Naive thymus-derived CD4-positive, alpha-beta T cell (primary cell): ENCODE measurements at regions of chr5 and their contacts with region 1.

Region 1: DNA sequence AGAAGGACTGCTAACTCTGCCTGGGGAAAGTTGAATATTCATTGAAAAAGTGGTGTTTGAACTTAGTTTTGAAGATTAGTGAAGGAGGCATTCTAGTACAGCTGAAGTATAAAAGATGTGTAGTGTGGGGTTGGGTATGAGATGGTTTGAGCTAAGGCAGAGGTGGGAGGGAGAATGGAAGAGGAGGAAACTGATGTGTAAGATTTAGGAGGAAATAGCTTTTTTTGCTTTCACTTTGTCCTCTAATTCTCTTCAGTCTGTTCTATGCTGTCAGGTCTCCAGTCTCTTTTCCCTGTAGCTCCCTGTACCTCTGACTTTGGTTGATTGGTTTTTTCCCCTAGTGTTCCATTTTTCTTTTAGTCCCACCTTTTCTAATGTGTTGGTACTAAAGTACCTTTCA is 9.0 kb downstream of the CREBRF start:
- DNase-seq: peak in 3 of 9 donors; percentile 8 to 23 (median 12)
- ATAC-seq: peak; percentile 62
- H3K4me3 ChIP-seq: no peak overlapping the region
- H3K4me3 Mint-ChIP-seq: peak overlapping the region; percentile 56 to 81 (median 70)
- H3K27ac ChIP-seq: peak overlapping the region; percentile 56
- H3K27ac Mint-ChIP-seq: peak overlapping the region; percentile 41 to 82 (median 76)
- H3K4me1 ChIP-seq: peaks cover 4 to 46% of the 10 kb centered on the region in 2 donors
- H3K4me1 Mint-ChIP-seq: peaks cover 35 to 94% (median 79%) of the 10 kb centered on the region in 7 donors
- H3K27me3 ChIP-seq: no peaks in the 10 kb centered on the region
- H3K27me3 Mint-ChIP-seq: no peaks in the 10 kb centered on the region

Region 2: DNA sequence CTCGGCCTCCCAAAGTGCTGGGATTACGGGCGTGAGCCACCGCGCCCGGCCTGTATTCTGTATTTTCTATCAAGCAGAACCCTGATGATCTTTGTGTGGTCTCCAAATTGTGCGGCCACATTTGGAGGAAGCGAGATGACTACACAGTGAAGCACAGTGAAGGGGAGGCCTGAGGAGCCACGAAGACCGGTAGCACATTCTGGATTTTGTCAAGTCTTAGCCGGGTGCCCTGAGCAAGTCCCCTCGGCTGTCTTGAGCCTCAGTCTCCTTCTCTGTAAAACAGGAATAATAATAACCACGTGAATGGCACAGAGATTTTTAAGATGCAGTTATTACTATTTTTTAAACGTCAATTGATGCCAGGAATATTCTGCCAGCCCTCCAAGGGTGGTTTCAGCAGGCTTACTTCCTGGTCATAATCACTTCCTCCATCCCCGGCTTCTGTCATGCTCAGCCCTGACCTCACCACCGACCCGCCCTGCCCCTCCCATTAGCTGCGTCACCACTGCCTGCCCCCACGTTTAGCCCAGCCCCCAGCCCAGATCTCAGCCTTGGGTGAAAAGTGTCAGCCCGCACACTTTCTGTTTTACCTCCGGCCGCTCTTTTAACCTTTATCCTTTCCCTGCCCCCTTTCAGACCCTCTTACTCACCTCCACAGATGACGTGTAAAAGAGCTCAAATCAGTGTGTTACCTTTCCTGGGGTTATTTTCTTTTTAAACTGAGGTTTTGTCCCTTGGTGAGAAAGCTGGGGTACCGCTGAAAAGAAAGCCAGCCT is 258.1 kb before region 1 on chr5:
- CTCF ChIA-PET with region 1: no interaction called
- POLR2A ChIA-PET with region 1: no interaction called
- intact Hi-C with region 1: no loop called
- DNase-seq: peak; percentile 24 to 78 (median 52)
- ATAC-seq: peak; percentile 98
- H3K4me3 ChIP-seq: peak overlapping the region; percentile 45
- H3K4me3 Mint-ChIP-seq: peak overlapping the region; percentile 73 to 87 (median 84)
- H3K27ac ChIP-seq: peak overlapping the region; percentile 74
- H3K27ac Mint-ChIP-seq: peak overlapping the region; percentile 86 to 98 (median 93)
- H3K4me1 ChIP-seq: peaks cover 0 to 12% of the 10 kb centered on the region in 2 donors
- H3K4me1 Mint-ChIP-seq: peaks cover 9 to 17% (median 13%) of the 10 kb centered on the region in 7 donors
- H3K27me3 ChIP-seq: no peaks in the 10 kb centered on the region
- H3K27me3 Mint-ChIP-seq: peaks cover 0 to 2% (median 0%) of the 10 kb centered on the region in 5 donors

Region 3: GRCh38 chr5:173078878-173079277 is 13.7 kb after region 1 on chr5:
- CTCF ChIA-PET with region 1: interaction called, 8 read pairs
- POLR2A ChIA-PET with region 1: no interaction called
- intact Hi-C with region 1: loop called in 1 of 2 experiments (anchors 2 kb)
- DNase-seq: no peak
- ATAC-seq: no peak
- H3K4me3 ChIP-seq: no peak overlapping the region
- H3K4me3 Mint-ChIP-seq: no peak overlapping the region
- H3K27ac ChIP-seq: no peak overlapping the region
- H3K27ac Mint-ChIP-seq: peak overlapping the region in 3 of 9 donors; percentile 28 to 48 (median 36)
- H3K4me1 ChIP-seq: peaks cover 0 to 5% of the 10 kb centered on the region in 2 donors
- H3K4me1 Mint-ChIP-seq: peaks cover 4 to 68% (median 58%) of the 10 kb centered on the region in 7 donors
- H3K27me3 ChIP-seq: no peaks in the 10 kb centered on the region
- H3K27me3 Mint-ChIP-seq: no peaks in the 10 kb centered on the region

Region 4: DNA sequence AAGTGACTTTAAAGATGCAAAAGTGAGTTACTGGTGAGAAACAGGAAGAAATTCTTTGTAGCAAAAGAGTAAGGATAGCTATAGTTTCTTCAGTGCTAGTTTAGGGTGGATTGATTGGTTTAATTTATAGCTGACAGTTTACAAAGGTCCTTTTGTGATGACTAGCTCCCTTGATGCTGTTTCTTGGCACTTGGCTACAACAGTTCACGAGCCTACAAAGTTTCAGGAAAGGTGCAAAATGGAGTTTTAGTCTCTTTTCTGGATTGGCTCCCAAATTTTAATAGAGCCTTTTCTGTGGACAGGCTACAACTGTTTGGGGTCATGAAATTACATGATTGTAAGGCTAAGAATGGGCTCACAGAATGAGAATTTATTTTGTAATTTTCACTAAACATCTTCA is 38.3 kb after region 1 on chr5:
- CTCF ChIA-PET with region 1: no interaction called
- POLR2A ChIA-PET with region 1: no interaction called
- intact Hi-C with region 1: loop called in 1 of 2 experiments (anchors 5 kb)
- DNase-seq: no peak
- ATAC-seq: no peak
- H3K4me3 ChIP-seq: no peak overlapping the region
- H3K4me3 Mint-ChIP-seq: no peak overlapping the region
- H3K27ac ChIP-seq: no peak overlapping the region
- H3K27ac Mint-ChIP-seq: no peak overlapping the region
- H3K4me1 ChIP-seq: peaks cover 0 to 17% of the 10 kb centered on the region in 2 donors
- H3K4me1 Mint-ChIP-seq: peaks cover 3 to 72% (median 57%) of the 10 kb centered on the region in 7 donors
- H3K27me3 ChIP-seq: no peaks in the 10 kb centered on the region
- H3K27me3 Mint-ChIP-seq: no peaks in the 10 kb centered on the region